ENCODE measurements at regions of chr2 and their contacts with region 1.

Region 1: DNA sequence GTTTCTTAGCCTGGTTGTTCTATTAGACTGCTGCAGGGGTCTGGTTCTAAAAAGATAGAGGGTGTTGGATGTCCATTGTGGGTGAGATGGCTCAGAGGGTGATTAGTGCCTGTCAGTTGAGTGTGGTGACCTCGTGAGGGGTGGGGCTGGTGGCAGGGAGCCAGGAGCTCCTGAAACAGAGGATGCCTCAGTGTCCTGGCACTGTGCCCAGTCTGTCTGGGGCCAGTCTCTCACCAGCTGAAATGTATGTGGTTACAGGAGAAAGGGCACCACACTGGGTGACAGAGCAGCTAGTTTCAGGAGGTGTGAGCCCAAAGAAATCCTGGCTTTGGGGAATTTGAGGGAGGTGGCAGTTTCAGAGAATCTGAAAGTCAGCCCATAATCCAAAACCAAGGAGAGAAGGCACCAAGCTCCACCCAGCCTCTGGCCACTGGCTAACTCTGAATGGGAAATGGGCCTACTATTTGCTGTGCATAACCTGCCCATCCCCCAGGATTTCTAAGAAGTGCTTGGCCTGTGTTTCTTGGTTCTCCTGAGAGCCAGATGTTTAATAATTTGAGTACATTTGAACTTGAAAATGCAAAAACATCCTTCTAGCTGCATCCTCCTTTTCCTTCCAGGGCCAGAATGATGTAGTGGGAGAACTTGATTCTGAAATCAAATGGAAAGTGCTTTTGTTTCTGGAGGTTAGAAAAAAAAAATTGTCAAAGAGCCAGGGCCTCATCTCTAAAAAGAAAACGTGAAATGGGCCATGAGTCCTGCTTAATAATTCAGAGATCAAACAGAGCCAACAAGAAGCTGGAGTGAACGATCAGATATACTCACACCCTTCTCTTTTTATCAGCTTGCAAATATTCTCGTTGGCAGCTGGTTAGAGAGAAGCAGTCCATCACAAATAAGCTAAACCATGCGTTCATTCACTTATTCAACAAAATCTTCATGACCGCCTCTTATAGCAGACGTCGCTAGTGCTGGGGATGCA is 92.3 kb downstream of the B3GNT2 start:
- DNase-seq: peak; percentile 79 to 93
- H3K4me3 ChIP-seq: no peak overlapping the region
- H3K27ac ChIP-seq: peak overlapping the region; percentile 58
- H3K4me1 ChIP-seq: peaks cover 44% of the 10 kb centered on the region
- H3K27me3 ChIP-seq: no peaks in the 10 kb centered on the region
- CTCF ChIP-seq: no peak

Region 2: GRCh38 chr2:62195421-62196277 is 92.5 kb before region 1 on chr2 and contains the start of gene B3GNT2:
- CTCF ChIA-PET with region 1: no interaction called
- POLR2A ChIA-PET with region 1: interaction called, 3 read pairs
- intact Hi-C with region 1: loop called (anchors 2 kb)
- DNase-seq: peak; percentile 56 to 82
- H3K4me3 ChIP-seq: peak within 1 kb of the TSS; percentile 98
- H3K27ac ChIP-seq: peak within 1 kb of the TSS; percentile 70
- H3K4me1 ChIP-seq: peaks cover 29% of the 10 kb centered on the region
- H3K27me3 ChIP-seq: no peaks in the 10 kb centered on the region
- CTCF ChIP-seq: no peak
- total RNA-seq, gene B3GNT2: 30.8 and 30.9 TPM in 2 replicates

Region 3: DNA sequence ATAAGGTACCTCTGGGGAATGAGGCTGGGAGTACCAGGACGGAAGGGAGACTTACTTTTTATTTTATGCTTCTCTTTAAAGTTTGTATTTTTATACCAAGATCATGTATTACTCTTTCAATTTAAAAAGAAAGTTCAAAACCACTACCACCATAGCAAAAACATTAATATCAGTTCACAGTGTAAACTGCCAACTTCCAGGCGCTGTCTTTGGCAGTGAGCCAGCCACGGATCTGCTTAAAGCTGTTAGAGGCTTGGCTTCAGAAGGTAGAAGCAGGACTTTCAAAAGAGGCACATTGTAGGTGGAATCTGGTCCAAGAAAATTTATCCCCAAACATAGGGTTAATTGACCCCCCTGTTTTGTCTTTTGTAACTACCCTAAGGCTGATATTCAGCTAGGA is 17.5 kb before region 1 on chr2:
- CTCF ChIA-PET with region 1: interaction called, 11 read pairs
- POLR2A ChIA-PET with region 1: interaction called, 24 read pairs
- intact Hi-C with region 1: no loop called
- DNase-seq: peak in 1 of 2 experiments; percentile 19
- H3K4me3 ChIP-seq: no peak overlapping the region
- H3K27ac ChIP-seq: no peak overlapping the region
- H3K4me1 ChIP-seq: no peaks in the 10 kb centered on the region
- H3K27me3 ChIP-seq: no peaks in the 10 kb centered on the region
- CTCF ChIP-seq: no peak

Region 4: DNA sequence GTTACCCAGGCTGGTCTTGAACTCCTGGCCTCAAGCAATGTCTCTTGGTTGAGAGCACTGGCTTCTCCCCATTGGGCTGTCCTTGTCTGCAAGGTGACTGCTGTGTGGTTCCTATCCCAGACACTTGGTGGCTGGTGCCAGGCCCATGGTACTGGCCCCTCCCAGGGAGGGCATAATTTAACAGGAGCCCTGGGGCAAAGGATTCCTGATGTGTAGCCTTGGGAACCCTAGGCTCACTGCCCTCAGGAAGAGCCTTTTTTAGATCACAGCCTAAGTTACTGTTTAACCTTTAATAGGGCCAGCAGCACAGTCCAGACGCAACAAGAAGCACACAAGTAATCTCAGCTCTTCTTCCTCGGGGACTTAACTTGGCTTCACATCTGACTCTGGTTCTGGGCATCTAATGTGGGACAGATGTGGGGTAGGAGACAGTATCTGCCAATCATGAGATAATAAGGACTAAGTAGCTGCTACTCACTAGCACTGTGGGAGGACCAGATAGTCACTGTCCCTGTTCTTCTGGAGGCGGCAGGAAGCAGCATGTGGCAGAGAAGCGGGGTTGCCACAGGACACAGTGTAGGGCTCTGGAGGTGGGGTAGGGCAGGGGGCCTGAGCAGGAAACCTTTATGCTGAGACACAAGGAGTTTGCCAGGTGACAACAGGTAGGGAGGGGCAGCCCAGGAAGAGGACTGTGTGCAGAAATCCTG is 81.5 kb after region 1 on chr2:
- CTCF ChIA-PET with region 1: no interaction called
- POLR2A ChIA-PET with region 1: no interaction called
- intact Hi-C with region 1: no loop called
- DNase-seq: no peak
- H3K4me3 ChIP-seq: no peak overlapping the region
- H3K27ac ChIP-seq: no peak overlapping the region
- H3K4me1 ChIP-seq: no peaks in the 10 kb centered on the region
- H3K27me3 ChIP-seq: no peaks in the 10 kb centered on the region
- CTCF ChIP-seq: no peak

Region 5: DNA sequence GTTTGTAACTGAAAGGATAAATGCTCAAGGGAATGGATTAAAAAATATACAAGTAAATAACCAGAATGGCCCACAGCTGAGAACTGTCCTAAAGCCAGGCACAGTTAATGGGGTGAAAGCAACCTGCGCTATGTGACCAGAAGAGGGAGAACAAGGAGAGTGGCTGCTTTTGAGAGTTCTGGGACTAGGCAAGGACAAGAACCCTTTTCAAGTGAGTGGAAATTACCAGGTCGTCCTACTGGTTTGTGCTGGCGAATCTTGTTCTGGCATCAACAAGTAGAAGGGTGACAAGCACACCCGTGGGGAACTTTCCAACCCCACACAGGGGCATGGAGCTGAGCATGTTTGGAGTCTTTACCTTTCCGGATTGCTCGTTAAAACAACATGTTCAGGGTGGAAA is 135.0 kb after region 1 on chr2:
- CTCF ChIA-PET with region 1: no interaction called
- POLR2A ChIA-PET with region 1: no interaction called
- intact Hi-C with region 1: no loop called
- DNase-seq: no peak
- H3K4me3 ChIP-seq: no peak overlapping the region
- H3K27ac ChIP-seq: no peak overlapping the region
- H3K4me1 ChIP-seq: peaks cover 4% of the 10 kb centered on the region; the same call in 1 of the 2 replicates
- H3K27me3 ChIP-seq: no peaks in the 10 kb centered on the region
- CTCF ChIP-seq: peak; percentile 38; the same call in 1 of the 2 replicates

Region 6: DNA sequence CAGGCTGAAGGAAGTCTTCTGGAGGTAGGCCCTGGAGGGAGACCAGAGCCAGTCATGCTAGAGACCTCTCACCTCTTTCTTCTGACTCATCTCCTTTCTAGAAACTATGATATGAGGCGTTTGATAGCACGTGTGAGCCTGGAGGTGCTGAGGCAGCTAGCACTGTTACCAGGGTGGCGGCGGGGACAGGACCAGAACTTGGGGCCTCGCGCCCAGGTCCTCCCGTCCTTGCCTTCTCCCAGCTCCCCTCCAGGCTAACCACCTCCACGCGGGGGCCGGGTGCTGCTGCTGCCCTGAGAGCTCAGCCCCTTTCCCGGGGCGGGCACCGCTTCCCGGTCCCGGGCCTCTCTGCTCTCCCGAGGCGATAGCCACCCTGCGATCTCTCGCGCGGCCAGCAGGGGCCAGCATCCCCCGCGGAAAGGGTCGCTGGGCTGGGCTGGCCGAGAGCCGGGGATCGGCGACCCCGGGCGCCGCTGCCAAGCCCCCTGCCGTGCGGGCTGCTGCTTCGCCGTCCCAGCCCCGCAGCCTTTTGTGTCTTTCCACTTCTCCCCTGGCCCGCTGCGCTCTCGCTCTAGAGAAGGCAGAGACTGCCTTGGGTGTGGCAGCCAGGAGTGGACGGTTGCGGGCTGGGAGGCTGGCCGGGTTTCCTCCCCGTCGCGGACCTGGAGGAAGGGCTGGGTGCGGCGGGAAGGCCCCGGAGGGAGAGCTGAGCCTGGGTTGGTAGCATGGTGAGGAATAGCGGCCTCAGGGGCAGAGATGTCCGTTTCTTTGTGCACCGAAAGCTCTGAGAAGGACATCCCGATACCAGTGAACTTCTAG is 168.7 kb after region 1 on chr2:
- CTCF ChIA-PET with region 1: no interaction called
- POLR2A ChIA-PET with region 1: no interaction called
- intact Hi-C with region 1: no loop called
- DNase-seq: peak; percentile 85 to 88
- H3K4me3 ChIP-seq: peak overlapping the region; percentile 72
- H3K27ac ChIP-seq: peak overlapping the region; percentile 72
- H3K4me1 ChIP-seq: peaks cover 16% of the 10 kb centered on the region
- H3K27me3 ChIP-seq: no peaks in the 10 kb centered on the region
- CTCF ChIP-seq: peak; percentile 98